Activated CD4-positive, alpha-beta T cell treated with anti-CD3 and anti-CD28 coated beads for 36 hours (primary cell): ENCODE measurements at regions of chr1 and their contacts with region 1.

Region 1: GRCh38 chr1:117059678-117060440 is at the start of gene TTF2:
- DNase-seq: peak; percentile 98
- ATAC-seq: peak; percentile 94
- H3K4me3 Mint-ChIP-seq: no peak within 1 kb of the TSS
- H3K27ac Mint-ChIP-seq: no peak within 1 kb of the TSS
- H3K4me1 Mint-ChIP-seq: peaks cover 41% of the 10 kb centered on the region
- H3K27me3 Mint-ChIP-seq: no peaks in the 10 kb centered on the region
- total RNA-seq, gene TTF2: 99.7 to 108 TPM

Region 2: DNA sequence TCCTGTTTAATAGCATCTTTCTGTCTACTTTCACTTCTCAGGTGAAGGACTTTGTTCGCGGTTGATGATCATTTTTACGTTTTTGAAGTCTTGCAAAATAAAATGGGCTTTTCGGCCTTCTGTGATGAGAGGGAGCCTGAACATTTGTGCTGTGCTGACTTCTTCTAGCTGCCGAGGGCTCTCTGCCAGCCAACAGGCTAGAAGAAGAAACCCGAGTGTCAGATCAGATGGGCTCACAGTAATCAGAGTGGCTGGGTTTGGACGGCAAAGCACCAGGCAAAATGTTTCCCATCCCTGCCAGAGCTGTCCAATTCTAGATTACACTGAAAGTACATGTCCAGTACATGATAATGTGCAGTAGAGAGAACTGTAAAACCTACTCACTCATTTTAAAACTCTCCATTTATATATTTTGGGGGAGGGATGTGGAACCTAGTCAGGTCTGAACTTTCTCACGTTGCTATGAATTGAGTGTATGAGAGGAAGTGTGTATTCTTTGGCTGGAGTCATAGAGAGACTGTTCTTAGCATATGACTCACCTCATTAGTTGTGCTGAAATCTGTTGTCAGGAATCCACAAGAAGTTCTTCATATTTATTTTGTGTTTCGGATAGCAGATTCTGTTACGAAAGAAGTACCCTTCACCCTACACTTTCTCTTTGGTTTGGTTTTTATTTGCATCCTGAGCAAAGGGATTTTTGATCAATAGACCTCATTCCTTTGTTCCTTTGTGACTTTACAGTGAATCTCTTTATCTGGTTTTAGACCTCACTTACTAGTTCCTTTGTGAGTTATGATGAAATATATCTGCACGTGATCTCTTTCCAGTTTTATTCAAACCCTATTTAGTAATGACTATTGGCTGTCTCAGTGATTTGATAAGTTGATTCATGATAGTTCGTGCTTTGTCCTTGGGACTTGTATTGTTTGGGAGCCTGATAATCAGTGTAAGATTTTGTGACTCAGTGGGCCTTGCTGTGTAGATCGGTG is 682.0 kb before region 1 on chr1:
- CTCF ChIA-PET with region 1: no interaction called
- POLR2A ChIA-PET with region 1: no interaction called
- intact Hi-C with region 1: loop called (anchors 1 to 2 kb)
- DNase-seq: peak; percentile 58
- ATAC-seq: peak; percentile 74
- H3K4me3 Mint-ChIP-seq: peak overlapping the region; percentile 93
- H3K27ac Mint-ChIP-seq: peak overlapping the region; percentile 92
- H3K4me1 Mint-ChIP-seq: peaks cover 73% of the 10 kb centered on the region
- H3K27me3 Mint-ChIP-seq: no peaks in the 10 kb centered on the region

Region 3: GRCh38 chr1:116724765-116725375 is 335.0 kb before region 1 on chr1:
- CTCF ChIA-PET with region 1: interaction called, 12 read pairs
- POLR2A ChIA-PET with region 1: interaction called, 3 read pairs
- intact Hi-C with region 1: loop called in 1 of 2 experiments (anchors 1 kb)
- DNase-seq: peak; percentile 91
- ATAC-seq: peak; percentile 86
- H3K4me3 Mint-ChIP-seq: no peak overlapping the region
- H3K27ac Mint-ChIP-seq: peak overlapping the region; percentile 26
- H3K4me1 Mint-ChIP-seq: peaks cover 32% of the 10 kb centered on the region
- H3K27me3 Mint-ChIP-seq: no peaks in the 10 kb centered on the region

Region 4: DNA sequence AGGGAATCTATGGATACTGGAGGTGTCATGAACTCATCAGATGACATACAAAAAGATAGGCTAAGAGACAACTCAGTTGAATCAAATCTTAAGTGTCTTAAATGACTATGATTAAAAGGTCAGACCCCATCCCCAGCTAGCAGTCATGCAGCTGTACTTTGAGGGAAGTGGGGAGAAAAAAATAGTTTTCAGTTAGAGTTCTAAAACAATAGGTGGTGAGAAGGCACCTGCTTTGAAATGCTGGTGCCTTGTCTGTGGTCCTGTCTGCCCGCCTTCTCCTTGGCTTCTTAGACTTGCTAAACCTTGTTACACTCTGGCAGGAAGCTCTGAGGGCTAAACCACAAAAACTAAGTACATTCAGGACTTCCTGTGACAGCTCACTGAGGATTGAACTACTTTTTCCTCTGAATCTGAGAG is 290.3 kb before region 1 on chr1:
- CTCF ChIA-PET with region 1: interaction called, 21 read pairs
- POLR2A ChIA-PET with region 1: interaction called, 80 read pairs
- intact Hi-C with region 1: loop called in 1 of 2 experiments (anchors 2 kb)
- DNase-seq: peak; percentile 86
- ATAC-seq: peak; percentile 53
- H3K4me3 Mint-ChIP-seq: peak overlapping the region; percentile 93
- H3K27ac Mint-ChIP-seq: peak overlapping the region; percentile 100
- H3K4me1 Mint-ChIP-seq: peaks cover 96% of the 10 kb centered on the region
- H3K27me3 Mint-ChIP-seq: no peaks in the 10 kb centered on the region

Region 5: DNA sequence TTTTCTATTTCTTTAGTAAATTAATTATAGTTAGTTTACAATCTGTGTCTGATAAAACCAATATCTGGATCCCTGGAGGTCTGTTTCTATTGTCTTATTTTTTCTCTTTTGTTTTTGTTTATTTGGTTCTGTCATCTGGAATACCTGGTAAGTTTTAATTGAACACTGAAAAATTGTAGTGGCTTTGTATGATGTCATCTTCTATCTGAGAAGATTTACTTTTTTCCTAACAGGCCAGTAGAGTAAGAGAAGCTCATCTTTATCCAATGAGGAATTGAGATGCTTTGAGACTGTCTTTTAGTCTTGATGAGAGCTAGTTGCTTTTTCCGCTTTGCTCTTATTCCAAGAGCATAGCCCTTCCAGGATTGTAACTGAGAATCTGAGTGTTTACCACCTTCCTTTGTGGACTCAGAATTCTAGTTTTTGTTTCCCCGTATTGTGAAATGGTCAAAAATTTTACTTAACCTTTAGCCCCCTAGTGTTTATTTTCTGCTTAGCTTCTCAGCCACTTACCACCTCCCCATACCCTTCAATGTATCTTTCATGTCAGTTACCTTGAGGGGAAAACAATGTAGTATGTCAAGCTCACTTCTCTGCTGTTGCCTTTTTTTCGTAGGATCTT is 125.2 kb before region 1 on chr1:
- CTCF ChIA-PET with region 1: interaction called, 3 read pairs
- POLR2A ChIA-PET with region 1: interaction called, 4 read pairs
- intact Hi-C with region 1: loop called (anchors 2 kb)
- DNase-seq: no peak
- ATAC-seq: no peak
- H3K4me3 Mint-ChIP-seq: no peak overlapping the region
- H3K27ac Mint-ChIP-seq: peak overlapping the region; percentile 77
- H3K4me1 Mint-ChIP-seq: peaks cover 7% of the 10 kb centered on the region
- H3K27me3 Mint-ChIP-seq: no peaks in the 10 kb centered on the region

Region 6: DNA sequence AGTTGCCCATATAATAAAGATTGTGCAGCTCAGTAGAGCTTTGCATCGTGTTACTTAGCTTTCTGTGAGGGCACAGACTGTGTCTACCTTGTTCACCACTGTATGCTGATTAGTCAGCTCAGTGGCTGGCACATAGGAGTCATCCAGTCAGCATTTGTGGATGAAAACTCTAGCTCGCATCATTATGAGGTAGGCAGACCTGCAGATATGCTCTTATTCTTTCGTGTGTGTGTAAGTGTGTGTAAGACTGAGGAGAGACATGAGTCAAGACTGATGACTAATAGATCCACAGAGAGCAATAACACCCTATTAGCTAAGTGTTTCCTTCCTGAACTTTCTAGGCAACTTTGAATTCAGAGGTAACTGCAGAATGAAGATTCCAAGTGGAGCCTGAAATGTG is 17.4 kb after region 1 on chr1:
- CTCF ChIA-PET with region 1: interaction called, 8 read pairs
- POLR2A ChIA-PET with region 1: interaction called, 26 read pairs
- intact Hi-C with region 1: loop called (anchors 1 to 2 kb)
- DNase-seq: peak; percentile 78
- ATAC-seq: peak; percentile 99
- H3K4me3 Mint-ChIP-seq: no peak overlapping the region
- H3K27ac Mint-ChIP-seq: peak overlapping the region; percentile 86
- H3K4me1 Mint-ChIP-seq: peaks cover 40% of the 10 kb centered on the region
- H3K27me3 Mint-ChIP-seq: no peaks in the 10 kb centered on the region

Region 7: DNA sequence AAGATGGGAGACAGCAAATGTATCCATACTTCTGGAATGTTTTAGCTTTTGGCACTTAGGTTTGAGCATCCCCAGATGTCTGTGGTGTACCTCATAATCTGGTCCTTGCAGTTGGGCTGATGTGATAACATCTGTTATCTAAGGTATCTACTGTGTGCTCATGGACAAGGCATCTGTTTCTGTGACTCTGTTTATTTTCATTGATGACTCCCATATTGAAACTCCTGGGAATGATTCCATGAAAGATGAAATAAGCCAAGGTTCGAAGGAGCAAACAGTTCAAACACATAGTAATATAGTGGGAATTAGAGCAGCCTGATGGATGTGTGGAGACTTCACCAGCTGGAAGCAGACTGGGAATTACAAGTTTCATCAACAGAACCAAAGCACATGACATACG is 82.3 kb after region 1 on chr1:
- CTCF ChIA-PET with region 1: no interaction called
- POLR2A ChIA-PET with region 1: no interaction called
- intact Hi-C with region 1: no loop called
- DNase-seq: no peak
- ATAC-seq: no peak
- H3K4me3 Mint-ChIP-seq: no peak overlapping the region
- H3K27ac Mint-ChIP-seq: no peak overlapping the region
- H3K4me1 Mint-ChIP-seq: no peaks in the 10 kb centered on the region
- H3K27me3 Mint-ChIP-seq: peaks cover 10% of the 10 kb centered on the region

Region 8: DNA sequence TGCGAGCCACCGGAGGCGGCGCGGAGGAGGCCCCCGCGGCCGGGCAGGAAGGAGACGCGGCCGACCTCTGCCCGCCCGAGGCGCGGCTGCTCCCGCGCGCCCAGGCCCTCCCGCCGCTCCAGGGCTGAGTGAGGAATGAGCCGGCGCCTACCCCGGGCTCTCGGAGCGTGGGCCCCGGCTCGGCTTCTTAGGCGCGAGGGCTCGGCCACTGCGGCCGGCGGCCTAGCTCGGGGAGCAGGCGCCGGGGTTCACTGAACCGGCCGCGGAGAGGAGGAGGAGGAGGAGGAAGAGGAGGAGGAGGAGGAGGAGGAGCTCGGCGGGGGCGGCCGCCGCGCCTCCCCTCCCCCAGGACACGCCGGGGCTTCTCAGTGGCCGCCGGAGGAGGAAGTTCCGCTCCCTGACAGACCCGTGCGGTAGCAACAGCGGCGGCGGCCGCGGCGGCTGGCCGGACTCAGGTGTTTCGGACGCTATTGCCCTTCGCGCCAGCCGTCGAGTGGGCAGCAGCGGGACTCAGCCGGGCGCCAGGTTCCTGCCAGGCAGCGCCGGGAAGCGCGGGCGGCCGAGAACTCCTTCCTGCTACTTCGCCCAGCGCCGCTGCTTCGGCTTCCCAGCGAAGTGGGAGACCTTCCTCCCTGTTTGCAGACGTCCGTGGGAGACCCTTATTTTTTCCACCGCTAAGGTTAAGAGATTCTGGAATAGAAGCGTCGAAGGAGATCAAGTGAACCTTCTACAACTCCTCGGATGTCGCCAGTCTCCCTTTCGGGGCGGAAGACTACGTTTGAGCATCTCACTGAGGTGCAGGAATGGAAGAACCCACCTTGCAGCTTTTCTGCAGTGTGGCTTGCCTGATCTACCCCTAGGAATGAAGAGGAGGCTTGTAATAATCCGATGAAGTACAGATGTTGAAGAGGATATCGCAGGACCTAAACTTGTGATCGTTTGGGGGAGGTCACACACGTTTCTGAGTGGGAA is 307.5 kb after region 1 on chr1 and contains the start of gene MAN1A2:
- CTCF ChIA-PET with region 1: no interaction called
- POLR2A ChIA-PET with region 1: no interaction called
- intact Hi-C with region 1: loop called (anchors 1 to 10 kb)
- DNase-seq: peak; percentile 82
- ATAC-seq: peak; percentile 60
- H3K4me3 Mint-ChIP-seq: peak within 1 kb of the TSS; percentile 85
- H3K27ac Mint-ChIP-seq: peak within 1 kb of the TSS; percentile 98
- H3K4me1 Mint-ChIP-seq: peaks cover 52% of the 10 kb centered on the region
- H3K27me3 Mint-ChIP-seq: no peaks in the 10 kb centered on the region
- total RNA-seq, gene MAN1A2: 18.5 to 20.4 TPM